ENCODE measurements at regions of chr3 and their contacts with region 1.

Region 1: DNA sequence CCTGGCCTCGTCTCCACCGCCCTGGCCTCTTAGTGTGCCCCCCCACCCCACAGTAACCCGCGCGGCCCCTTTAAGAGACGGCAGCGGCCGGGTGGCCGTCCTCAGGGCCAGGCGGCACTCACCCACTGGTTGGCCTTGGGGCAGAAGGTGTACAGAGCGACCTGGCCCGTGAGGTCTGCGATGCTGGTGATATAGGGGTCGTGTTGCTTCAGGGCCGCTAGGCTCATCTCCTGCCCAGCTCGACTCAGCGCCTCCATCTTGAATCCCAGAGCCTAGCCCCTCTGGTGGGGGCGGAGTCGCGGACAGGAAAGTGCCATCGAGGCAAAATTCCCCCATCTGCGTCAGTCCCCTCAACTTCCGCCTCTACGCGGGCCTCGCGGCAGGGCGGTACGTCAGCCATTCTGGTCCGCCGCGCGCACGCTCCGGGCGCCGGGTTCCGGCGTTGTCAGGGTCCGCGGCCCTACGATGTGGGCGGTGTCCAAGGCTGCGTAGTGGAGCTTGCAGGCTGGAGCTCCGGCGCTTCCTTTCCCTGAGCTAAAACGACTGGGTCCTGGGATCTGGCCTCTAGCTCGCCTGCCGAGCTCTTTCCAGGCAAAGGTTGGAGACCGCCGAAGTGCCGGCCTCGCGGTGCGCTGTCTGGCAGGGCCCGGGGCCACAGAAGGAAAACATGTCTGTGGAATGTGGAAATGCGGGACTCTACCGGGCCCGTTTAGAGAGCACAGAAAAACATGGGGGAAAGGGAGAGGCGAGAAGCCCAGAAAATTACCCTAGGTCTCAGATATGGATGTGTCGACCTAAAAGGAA is at the start of gene DCP1A:
- DNase-seq: peak; percentile 97
- H3K4me3 ChIP-seq: peak within 1 kb of the TSS; percentile 76 to 99 (median 90)
- H3K27ac ChIP-seq: peak within 1 kb of the TSS; percentile 93 to 97 (median 95)
- H3K4me1 ChIP-seq: peaks cover 12 to 45% (median 26%) of the 10 kb centered on the region in 4 donors
- H3K27me3 ChIP-seq: no peaks in the 10 kb centered on the region
- CTCF ChIP-seq: no peak
- EP300 ChIP-seq: no peak
- POLR2A ChIP-seq: peak; percentile 92
- total RNA-seq, gene DCP1A: 11.6 to 22.4 (median 17.2) TPM

Region 2: GRCh38 chr3:53114011-53114400 is 233.5 kb before region 1 on chr3:
- in situ Hi-C with region 1: no loop called
- intact Hi-C with region 1: loop called (anchors 10 kb)
- DNase-seq: peak; percentile 86
- H3K4me3 ChIP-seq: no peak overlapping the region
- H3K27ac ChIP-seq: peak overlapping the region in 3 of 4 donors; percentile 57 to 76 (median 58)
- H3K4me1 ChIP-seq: peaks cover 0 to 17% (median 5%) of the 10 kb centered on the region in 4 donors
- H3K27me3 ChIP-seq: no peaks in the 10 kb centered on the region
- CTCF ChIP-seq: peak; percentile 89 to 95 (median 92)
- EP300 ChIP-seq: no peak
- POLR2A ChIP-seq: no peak

Region 3: DNA sequence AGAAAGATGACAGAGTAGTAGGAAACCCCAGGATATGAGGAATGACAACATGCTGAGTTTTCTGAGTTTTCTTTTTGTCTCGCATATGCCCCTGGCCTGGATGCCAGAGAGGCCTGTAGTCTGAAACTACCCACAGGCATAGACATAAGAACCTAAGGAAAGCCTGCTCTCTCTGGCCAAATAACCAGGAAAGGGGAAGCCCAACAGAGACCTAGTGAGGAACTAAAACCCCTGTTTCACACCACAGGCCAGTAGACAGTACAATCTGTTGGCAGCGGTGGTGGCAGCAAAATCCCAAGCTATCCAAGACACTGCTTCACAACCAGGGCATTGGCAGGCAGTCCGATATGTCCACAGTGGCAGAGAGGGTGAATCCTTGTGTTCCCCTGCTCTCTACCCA is 54.9 kb after region 1 on chr3:
- in situ Hi-C with region 1: no loop called
- intact Hi-C with region 1: no loop called
- DNase-seq: no peak
- H3K4me3 ChIP-seq: no peak overlapping the region
- H3K27ac ChIP-seq: no peak overlapping the region
- H3K4me1 ChIP-seq: no peaks in the 10 kb centered on the region
- H3K27me3 ChIP-seq: no peaks in the 10 kb centered on the region
- CTCF ChIP-seq: no peak
- EP300 ChIP-seq: no peak
- POLR2A ChIP-seq: no peak